Heart left ventricle (tissue), 16 donors: ENCODE measurements at regions of chr16 and their contacts with region 1.

Region 1: GRCh38 chr16:28974437-28975157 is at the start of gene SPNS1:
- DNase-seq: peak; percentile 97 to 99 (median 98)
- ATAC-seq: peak; percentile 95 to 99 (median 98)
- H3K4me3 ChIP-seq: peak within 1 kb of the TSS; percentile 67 to 98 (median 88)
- H3K27ac ChIP-seq: peak within 1 kb of the TSS in 11 of 12 donors; percentile 75 to 91 (median 81)
- H3K4me1 ChIP-seq: peaks cover 0 to 24% (median 13%) of the 10 kb centered on the region in 12 donors
- H3K27me3 ChIP-seq: no peaks in the 10 kb centered on the region
- CTCF ChIP-seq: no peak
- POLR2A ChIP-seq: peak in 1 of 2 donors; percentile 64
- total RNA-seq, gene SPNS1: 13.4 to 33.0 (median 16.6) TPM

Region 2: DNA sequence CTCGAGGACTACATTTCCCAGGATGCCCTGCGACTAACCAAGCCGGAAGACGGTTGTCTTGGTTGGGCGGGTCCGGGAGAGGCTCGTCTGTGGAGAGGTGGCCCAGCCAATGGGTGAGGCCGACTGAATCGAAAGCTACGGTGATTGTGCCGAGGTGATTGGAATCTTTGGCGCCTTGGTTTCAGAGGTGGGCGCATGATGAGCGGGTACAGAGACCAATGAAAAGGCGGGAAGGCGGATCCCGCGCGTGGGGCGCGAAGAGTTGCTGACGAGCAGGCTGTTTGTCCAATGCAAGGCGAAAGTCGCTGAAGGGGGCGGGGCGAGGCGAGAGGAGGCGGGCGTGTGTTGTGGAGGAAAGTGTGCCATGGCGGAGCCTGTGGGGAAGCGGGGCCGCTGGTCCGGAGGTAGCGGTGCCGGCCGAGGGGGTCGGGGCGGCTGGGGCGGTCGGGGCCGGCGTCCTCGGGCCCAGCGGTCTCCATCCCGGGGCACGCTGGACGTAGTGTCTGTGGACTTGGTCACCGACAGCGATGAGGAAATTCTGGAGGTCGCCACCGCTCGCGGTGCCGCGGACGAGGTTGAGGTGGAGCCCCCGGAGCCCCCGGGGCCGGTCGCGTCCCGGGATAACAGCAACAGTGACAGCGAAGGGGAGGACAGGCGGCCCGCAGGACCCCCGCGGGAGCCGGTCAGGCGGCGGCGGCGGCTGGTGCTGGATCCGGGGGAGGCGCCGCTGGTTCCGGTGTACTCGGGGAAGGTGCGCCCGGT is 23.8 kb before region 1 on chr16 and contains the start of gene NFATC2IP:
- intact Hi-C with region 1: loop called in 2 of 10 experiments (anchors 2 kb)
- DNase-seq: peak; percentile 100
- ATAC-seq: peak; percentile 98 to 100 (median 99)
- H3K4me3 ChIP-seq: peak within 1 kb of the TSS; percentile 77 to 100 (median 90)
- H3K27ac ChIP-seq: peak within 1 kb of the TSS; percentile 79 to 94 (median 84)
- H3K4me1 ChIP-seq: peaks cover 0 to 24% (median 12%) of the 10 kb centered on the region in 12 donors
- H3K27me3 ChIP-seq: no peaks in the 10 kb centered on the region
- CTCF ChIP-seq: no peak
- POLR2A ChIP-seq: peak in 1 of 2 donors; percentile 41
- total RNA-seq, gene NFATC2IP: 11.1 to 25.3 (median 19.5) TPM